SK-N-SH (cell line): ENCODE measurements at regions of chr18 and their contacts with region 1.

Region 1: DNA sequence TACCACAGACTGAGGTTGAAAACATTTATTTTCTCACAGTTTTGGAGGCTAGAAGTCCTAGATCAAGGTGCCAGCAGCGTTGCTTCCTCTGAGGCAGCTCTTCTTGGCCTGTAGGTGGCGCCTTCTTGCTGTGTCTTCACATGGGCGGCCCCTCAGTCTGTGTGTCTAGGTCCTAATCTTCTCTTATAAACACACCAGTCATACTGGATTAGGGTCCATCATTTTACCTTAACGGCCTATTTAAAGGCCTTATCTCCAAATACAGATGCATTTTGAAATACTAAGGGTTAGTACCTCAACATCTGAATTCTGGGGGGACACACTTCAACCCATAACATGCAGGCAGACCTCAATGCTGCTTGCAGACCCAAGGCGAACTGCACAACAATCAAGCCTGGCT is 4.4 kb upstream of the RMC1 start:
- DNase-seq: peak; percentile 68
- H3K4me3 ChIP-seq: peak overlapping the region in 1 of 2 experiments; percentile 33; a peak in 1 of 4 replicates
- H3K27ac ChIP-seq: no peak overlapping the region
- H3K4me1 ChIP-seq: peaks cover 0 to 4% of the 10 kb centered on the region in 2 experiments; a peak in 1 of 4 replicates
- H3K27me3 ChIP-seq: no peaks in the 10 kb centered on the region
- CTCF ChIP-seq: peak; percentile 93
- EP300 ChIP-seq: no peak
- RAD21 ChIP-seq: peak; percentile 78

Region 2: DNA sequence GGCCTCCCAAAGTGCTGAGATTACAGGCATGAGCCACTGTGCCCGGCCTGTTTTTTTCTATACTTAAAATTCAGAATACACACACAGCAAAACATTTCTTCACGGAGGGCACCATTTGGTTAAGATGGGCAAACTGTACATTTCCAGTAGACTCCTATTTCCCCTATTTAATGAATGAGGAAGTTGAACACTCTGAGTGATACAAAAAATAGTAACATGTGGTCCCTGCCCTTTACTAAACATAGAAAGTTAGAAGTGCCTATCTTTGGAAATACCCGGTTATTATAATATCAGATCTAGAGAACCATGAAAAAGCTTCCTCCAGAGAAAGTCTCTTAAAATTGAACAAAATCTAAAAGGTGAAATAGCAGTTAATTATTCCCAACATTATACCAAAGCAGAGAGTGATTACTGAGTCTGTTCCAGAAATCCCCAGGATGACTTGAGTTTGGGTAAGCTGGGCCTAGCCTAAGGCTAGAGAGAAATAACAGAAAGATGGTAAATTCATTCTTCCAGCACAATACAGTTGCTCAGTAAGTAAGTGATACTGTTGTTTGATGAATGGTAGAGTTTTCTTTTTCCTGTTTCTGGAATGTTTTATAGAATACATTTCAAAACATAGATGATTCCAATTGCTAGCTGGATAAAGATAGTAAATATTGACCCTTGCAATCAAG is 18.9 kb before region 1 on chr18:
- CTCF ChIA-PET with region 1: interaction called, 17 read pairs
- POLR2A ChIA-PET with region 1: no interaction called
- DNase-seq: no peak
- H3K4me3 ChIP-seq: no peak overlapping the region
- H3K27ac ChIP-seq: no peak overlapping the region
- H3K4me1 ChIP-seq: peaks cover 0 to 2% of the 10 kb centered on the region in 2 experiments; a peak in 1 of 4 replicates
- H3K27me3 ChIP-seq: no peaks in the 10 kb centered on the region
- CTCF ChIP-seq: no peak
- EP300 ChIP-seq: no peak
- RAD21 ChIP-seq: no peak

Region 3: DNA sequence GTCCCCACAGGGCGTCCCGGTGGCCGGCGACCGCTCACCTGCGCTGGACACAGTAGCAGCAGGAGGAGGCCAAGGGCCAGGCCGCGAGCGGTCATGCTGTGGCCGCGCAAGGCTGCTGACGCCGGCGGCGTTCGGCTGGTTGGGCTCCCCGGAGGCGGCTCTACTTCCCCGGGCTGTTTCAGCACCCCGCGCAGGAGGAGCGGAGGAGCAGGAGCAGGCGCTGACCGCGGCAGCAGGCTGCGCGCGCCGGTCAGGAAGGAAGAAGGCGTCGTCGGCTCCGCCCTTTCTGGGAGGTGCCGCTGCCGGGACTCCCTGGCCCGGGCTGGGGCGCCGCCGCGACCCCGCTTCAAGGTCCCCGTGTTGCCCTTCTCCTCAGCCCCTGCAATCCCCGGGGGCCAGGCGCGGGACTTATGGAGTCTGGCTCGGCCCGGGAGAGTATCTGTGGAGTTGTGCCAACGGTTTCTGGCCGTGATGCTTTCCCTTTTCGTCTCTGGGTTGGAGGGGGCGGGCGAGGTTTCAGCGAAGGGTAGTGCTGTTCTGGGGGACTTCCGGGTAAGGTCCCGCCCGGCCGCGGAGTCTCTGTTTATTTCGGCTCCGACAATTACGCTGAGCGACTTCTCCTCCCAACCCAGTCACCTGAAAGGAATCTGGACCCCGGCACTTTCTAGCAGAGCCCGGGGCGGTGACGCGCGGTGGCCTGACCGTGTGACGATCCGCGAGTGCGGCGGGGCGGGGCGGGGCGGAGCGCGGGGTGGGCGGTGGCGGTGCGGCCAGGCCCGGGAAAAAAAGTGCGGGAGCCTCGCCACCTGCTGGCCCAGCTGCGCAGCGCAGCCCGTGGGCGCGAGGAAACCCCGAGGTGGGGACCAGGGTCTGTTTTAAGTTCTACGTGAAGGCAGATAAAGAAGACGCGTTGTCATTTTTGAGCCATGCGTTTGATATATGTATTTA is 87.6 kb after region 1 on chr18 and contains the start of gene NPC1:
- CTCF ChIA-PET with region 1: interaction called, 13 read pairs
- POLR2A ChIA-PET with region 1: no interaction called
- DNase-seq: peak; percentile 96
- H3K4me3 ChIP-seq: peak within 1 kb of the TSS; percentile 81 to 83
- H3K27ac ChIP-seq: peak within 1 kb of the TSS; percentile 91 to 99
- H3K4me1 ChIP-seq: peaks cover 0 to 9% of the 10 kb centered on the region in 2 experiments; a peak in 1 of 4 replicates
- H3K27me3 ChIP-seq: no peaks in the 10 kb centered on the region
- CTCF ChIP-seq: peak; percentile 73
- EP300 ChIP-seq: no peak
- RAD21 ChIP-seq: peak; percentile 71
- polyA plus RNA-seq, gene NPC1: 23.9 and 30.7 TPM in 2 replicates